Mammary epithelial cell (primary cell): ENCODE measurements at regions of chr1 and their contacts with region 1.

Region 1: GRCh38 chr1:110495926-110496600 is 22.9 kb downstream of the KCNA10 start:
- DNase-seq: peak; percentile 46
- H3K4me3 ChIP-seq: no peak overlapping the region
- H3K27ac ChIP-seq: no peak overlapping the region
- H3K4me1 ChIP-seq: no peaks in the 10 kb centered on the region
- H3K27me3 ChIP-seq: no peaks in the 10 kb centered on the region
- CTCF ChIP-seq: peak; percentile 94 to 95

Region 2: DNA sequence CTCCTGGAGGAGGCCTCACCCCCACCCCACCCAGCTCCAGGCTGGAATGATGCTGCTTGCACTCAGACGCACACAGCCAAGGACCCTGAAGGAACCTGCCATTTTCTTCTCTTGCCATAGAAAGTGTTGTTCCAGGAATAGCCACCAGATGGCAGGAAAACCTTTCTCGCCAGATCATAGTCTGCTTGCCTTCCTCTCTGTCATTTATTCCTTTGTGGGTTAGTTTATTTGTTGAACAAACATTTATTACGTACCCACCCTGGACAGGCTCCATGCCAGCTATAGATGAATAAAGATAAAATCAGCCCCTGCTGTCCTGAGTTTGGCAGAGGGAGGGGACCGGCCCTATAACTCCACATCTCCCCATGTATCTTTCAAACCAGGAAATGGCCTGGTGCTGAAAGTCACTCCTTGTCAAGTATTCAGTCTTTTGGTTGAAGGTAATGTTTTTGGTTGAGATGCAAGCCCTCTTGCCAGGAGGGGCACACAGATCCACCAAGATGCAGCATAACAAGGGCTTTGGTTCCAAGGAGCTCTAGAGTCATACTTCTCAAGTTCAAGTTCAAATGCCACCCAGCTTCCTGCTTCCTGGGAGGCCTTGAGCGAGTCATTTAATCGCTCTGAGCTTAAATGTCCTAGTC is 292.9 kb before region 1 on chr1:
- CTCF ChIA-PET with region 1: interaction called, 8 read pairs
- dilution Hi-C with region 1: no loop called
- in situ Hi-C with region 1: no loop called
- intact Hi-C with region 1: loop called (anchors 1 kb)
- DNase-seq: peak; percentile 48
- H3K4me3 ChIP-seq: no peak overlapping the region
- H3K27ac ChIP-seq: no peak overlapping the region
- H3K4me1 ChIP-seq: no peaks in the 10 kb centered on the region
- H3K27me3 ChIP-seq: no peaks in the 10 kb centered on the region
- CTCF ChIP-seq: peak; percentile 84 to 96

Region 3: DNA sequence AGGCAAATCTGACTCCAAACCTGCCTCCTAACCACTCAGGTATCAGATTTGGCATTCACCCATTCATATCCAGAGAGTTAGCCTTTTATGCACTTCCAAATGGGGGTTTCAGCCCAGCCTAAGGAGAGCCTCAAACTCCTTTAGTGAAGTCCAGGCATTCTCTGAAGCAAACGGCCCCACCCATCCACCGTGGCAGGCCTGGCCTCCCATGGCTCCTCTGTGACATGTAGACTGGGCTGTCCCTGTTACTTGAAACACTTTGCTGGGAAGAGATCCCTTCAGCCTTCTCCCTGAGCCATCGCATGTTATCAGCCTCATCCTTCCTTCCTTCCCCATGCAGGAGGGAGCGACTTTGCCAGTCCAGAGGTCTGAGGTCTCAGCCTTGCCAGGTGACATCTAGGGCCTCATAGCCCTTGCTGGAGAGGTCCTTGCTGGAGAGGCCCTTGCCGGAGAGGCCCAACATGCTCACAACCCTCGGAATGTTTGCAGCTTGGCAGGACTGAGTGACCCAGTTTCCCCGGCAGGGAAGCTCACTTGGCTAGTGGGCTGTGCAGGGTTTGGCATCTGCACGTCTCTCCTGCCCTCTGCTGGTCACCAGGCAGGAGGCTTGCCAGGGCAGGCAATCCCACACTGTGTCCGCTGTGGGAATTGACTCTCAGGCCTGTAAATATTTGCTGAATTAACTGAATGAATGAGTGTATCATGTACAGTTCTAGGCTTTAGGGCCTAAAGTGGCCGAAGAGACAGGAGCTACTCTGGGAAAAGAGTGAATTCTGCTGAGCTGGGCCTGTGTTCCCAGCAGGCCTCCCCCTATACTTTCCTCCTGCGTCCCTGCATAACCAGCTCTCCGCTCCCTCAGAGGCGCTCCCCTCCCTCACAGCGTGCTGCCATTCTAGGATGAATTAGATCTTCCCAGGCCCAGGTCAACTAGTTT is 183.6 kb before region 1 on chr1:
- CTCF ChIA-PET with region 1: no interaction called
- dilution Hi-C with region 1: no loop called
- in situ Hi-C with region 1: no loop called
- intact Hi-C with region 1: loop called (anchors 2 kb)
- DNase-seq: peak; percentile 49
- H3K4me3 ChIP-seq: no peak overlapping the region
- H3K27ac ChIP-seq: no peak overlapping the region
- H3K4me1 ChIP-seq: peaks cover 20% of the 10 kb centered on the region
- H3K27me3 ChIP-seq: no peaks in the 10 kb centered on the region
- CTCF ChIP-seq: peak; percentile 97 to 99

Region 4: GRCh38 chr1:110412576-110412975 is 83.5 kb before region 1 on chr1:
- CTCF ChIA-PET with region 1: interaction called, 7 read pairs
- dilution Hi-C with region 1: no loop called
- in situ Hi-C with region 1: no loop called
- intact Hi-C with region 1: loop called (anchors 1 kb)
- DNase-seq: peak; percentile 58
- H3K4me3 ChIP-seq: no peak overlapping the region
- H3K27ac ChIP-seq: no peak overlapping the region
- H3K4me1 ChIP-seq: no peaks in the 10 kb centered on the region
- H3K27me3 ChIP-seq: no peaks in the 10 kb centered on the region
- CTCF ChIP-seq: peak; percentile 63 to 89

Region 5: GRCh38 chr1:110460253-110461220 is 35.5 kb before region 1 on chr1:
- CTCF ChIA-PET with region 1: interaction called, 5 read pairs
- dilution Hi-C with region 1: no loop called
- in situ Hi-C with region 1: no loop called
- intact Hi-C with region 1: loop called (anchors 1 kb)
- DNase-seq: peak; percentile 62
- H3K4me3 ChIP-seq: no peak overlapping the region
- H3K27ac ChIP-seq: no peak overlapping the region
- H3K4me1 ChIP-seq: peaks cover 22% of the 10 kb centered on the region
- H3K27me3 ChIP-seq: no peaks in the 10 kb centered on the region
- CTCF ChIP-seq: peak; percentile 98 to 99

Region 6: DNA sequence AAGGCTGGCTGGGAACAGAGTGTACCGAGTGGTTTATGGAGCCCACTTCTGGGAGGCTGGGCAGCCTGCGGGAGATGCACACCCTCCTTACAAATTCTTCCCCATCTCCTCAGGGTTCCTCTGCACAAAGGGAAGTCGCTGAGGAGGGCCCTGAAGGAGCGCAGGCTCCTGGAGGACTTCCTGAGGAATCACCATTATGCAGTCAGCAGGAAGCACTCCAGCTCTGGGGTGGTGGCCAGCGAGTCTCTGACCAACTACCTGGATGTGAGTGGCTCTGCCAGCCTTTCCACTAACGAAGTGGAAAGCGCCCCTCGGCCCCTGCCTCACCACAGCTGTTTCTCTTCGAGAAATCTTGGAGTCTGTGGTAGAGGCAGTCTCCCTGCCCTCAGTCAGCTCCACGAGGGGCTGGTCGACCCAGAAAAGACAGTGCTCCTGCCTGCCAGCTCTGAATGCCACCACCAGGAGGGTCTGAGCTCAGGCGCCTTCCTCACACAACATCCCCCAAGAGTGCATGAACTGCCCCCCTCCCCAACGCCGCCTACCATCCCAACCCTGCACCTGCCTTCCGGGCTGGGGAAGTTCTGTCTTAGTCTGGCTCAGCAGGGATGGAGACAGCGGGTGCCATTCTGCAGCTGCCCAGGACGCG is 13.3 kb before region 1 on chr1:
- CTCF ChIA-PET with region 1: interaction called, 3 read pairs
- dilution Hi-C with region 1: no loop called
- in situ Hi-C with region 1: no loop called
- intact Hi-C with region 1: loop called (anchors 1 kb)
- DNase-seq: no peak
- H3K4me3 ChIP-seq: no peak overlapping the region
- H3K27ac ChIP-seq: no peak overlapping the region
- H3K4me1 ChIP-seq: peaks cover 12% of the 10 kb centered on the region
- H3K27me3 ChIP-seq: peaks cover 4% of the 10 kb centered on the region
- CTCF ChIP-seq: no peak